Sigmoid colon (tissue), 7 donors: ENCODE measurements at regions of chr22 and their contacts with region 1.

Region 1: DNA sequence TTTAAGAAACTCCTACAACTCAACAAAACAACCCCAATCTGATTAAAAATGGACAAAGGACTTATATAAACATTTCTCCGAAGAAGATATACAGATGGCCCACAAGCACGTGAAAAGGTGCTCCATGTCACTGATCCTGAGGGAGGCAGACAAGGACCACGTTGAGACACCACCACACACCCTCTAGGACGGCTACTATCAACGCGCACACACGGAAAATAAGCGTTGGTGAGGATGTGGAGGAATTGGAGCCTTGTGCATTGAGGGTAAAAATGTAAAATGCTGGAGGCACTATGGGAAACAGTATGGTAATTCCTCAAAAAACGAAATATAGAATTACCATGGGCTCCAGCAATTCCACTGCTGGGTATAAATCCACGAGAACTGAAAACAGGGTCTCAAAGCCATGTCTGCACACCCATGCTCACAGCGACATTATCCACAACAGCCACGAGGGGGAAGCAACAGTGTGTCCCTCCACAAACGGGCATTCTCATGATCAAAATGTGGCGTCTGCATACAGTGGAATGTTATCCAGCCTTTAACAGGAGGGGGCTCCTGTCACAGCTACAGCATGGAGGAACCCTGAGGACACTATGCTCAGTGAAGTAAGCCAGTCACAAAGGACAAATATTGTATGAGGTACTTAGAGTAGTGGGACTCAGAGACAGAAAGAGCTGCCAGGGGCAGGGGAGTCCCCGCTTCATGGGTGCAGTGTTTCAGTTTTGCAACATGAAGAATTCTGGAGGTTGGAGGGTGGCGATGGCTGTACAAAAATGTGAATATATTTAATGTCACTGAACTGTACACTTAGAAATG is 22.5 kb downstream of the YPEL1 start:
- DNase-seq: no peak
- H3K4me3 ChIP-seq: peak overlapping the region in 2 of 4 donors; percentile 7 to 14
- H3K27ac ChIP-seq: peak overlapping the region; percentile 0 to 54 (median 19)
- H3K4me1 ChIP-seq: peaks cover 0 to 15% (median 6%) of the 10 kb centered on the region in 4 donors
- H3K27me3 ChIP-seq: no peaks in the 10 kb centered on the region
- CTCF ChIP-seq: peak; percentile 75 to 84 (median 82)
- EP300 ChIP-seq: no peak
- POLR2A ChIP-seq: no peak

Region 2: GRCh38 chr22:21444701-21445436 is 268.2 kb before region 1 on chr22:
- intact Hi-C with region 1: no loop called
- DNase-seq: peak; percentile 63
- H3K4me3 ChIP-seq: no peak overlapping the region
- H3K27ac ChIP-seq: no peak overlapping the region
- H3K4me1 ChIP-seq: no peaks in the 10 kb centered on the region
- H3K27me3 ChIP-seq: no peaks in the 10 kb centered on the region
- CTCF ChIP-seq: no peak
- EP300 ChIP-seq: no peak
- POLR2A ChIP-seq: no peak

Region 3: DNA sequence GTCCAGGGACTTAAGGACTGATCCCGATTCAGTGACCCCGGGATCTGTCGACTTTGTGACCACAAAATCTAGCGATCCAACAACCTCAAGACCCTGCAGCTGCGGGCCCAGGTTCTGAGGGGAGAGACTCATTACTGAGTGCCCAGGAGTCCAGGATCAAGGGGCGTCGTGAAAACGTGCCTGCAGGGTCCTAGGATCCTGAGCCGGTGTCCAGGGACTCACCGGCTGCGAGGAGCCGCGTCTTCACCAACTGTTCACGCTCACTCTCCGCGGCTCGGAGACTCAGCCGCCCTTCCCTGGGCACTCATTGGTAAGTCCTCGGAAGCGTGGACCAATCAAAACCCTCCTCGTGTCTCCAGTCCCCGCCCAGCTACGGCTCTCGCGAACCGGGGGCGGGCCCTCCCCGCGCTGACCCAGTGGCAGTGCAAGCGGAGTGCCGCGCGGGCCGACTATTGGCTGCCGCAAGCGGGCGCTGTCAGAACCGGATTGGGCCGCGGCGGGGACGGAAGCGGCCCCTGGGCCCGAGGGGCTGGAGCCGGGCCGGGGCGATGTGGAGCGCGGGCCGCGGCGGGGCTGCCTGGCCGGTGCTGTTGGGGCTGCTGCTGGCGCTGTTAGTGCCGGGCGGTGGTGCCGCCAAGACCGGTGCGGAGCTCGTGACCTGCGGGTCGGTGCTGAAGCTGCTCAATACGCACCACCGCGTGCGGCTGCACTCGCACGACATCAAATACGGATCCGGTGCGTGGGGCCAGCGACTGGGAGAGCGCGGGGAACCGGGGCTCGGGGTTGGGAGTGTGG is 71.1 kb before region 1 on chr22 and contains the start of gene SDF2L1:
- intact Hi-C with region 1: no loop called
- DNase-seq: peak; percentile 99
- H3K4me3 ChIP-seq: peak within 1 kb of the TSS; percentile 48 to 69 (median 66)
- H3K27ac ChIP-seq: peak within 1 kb of the TSS; percentile 67 to 79 (median 74)
- H3K4me1 ChIP-seq: peaks cover 0 to 30% (median 20%) of the 10 kb centered on the region in 4 donors
- H3K27me3 ChIP-seq: no peaks in the 10 kb centered on the region
- CTCF ChIP-seq: no peak
- EP300 ChIP-seq: no peak
- POLR2A ChIP-seq: peak in 1 of 2 donors; percentile 9
- total RNA-seq, gene SDF2L1: 6.1 to 38.8 (median 24.4) TPM

Region 4: DNA sequence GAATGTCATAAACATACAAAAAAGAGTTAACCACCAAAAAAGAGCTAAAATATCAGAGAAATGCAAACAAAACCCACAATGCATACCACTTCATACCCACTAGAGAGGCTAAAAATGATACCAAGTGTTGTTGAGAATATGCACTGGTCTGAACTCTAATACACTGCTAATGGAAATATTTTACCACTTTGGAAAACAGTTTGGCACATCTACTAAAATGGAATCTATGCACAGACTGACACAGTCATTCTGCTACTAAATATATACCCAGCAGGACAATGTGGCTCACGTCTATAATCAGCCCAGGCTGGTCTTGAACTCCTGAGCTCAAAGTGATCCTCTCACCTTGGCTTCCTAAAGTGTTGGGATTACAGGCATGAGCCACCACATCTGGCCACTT is 136.4 kb after region 1 on chr22:
- intact Hi-C with region 1: no loop called
- DNase-seq: no peak
- H3K4me3 ChIP-seq: no peak overlapping the region
- H3K27ac ChIP-seq: peak overlapping the region in 3 of 4 donors; percentile 4 to 70 (median 12)
- H3K4me1 ChIP-seq: peaks cover 0 to 50% (median 27%) of the 10 kb centered on the region in 4 donors
- H3K27me3 ChIP-seq: no peaks in the 10 kb centered on the region
- CTCF ChIP-seq: no peak
- EP300 ChIP-seq: no peak
- POLR2A ChIP-seq: no peak

Region 5: GRCh38 chr22:21952586-21953571 is 239.8 kb after region 1 on chr22 and contains the start of gene PPM1F:
- intact Hi-C with region 1: loop called (anchors 1 kb)
- DNase-seq: peak; percentile 91
- H3K4me3 ChIP-seq: peak within 1 kb of the TSS; percentile 67 to 83 (median 70)
- H3K27ac ChIP-seq: peak within 1 kb of the TSS; percentile 73 to 79 (median 74)
- H3K4me1 ChIP-seq: peaks cover 0 to 27% (median 18%) of the 10 kb centered on the region in 4 donors
- H3K27me3 ChIP-seq: no peaks in the 10 kb centered on the region
- CTCF ChIP-seq: peak; percentile 12 to 93 (median 62)
- EP300 ChIP-seq: no peak
- POLR2A ChIP-seq: no peak
- total RNA-seq, gene PPM1F: 20.3 to 39.2 (median 30.6) TPM

Region 6: GRCh38 chr22:22235558-22235957 is 522.5 kb after region 1 on chr22:
- intact Hi-C with region 1: no loop called
- DNase-seq: no peak
- H3K4me3 ChIP-seq: no peak overlapping the region
- H3K27ac ChIP-seq: no peak overlapping the region
- H3K4me1 ChIP-seq: no peaks in the 10 kb centered on the region
- H3K27me3 ChIP-seq: peaks cover 0 to 9% (median 0%) of the 10 kb centered on the region in 3 donors
- CTCF ChIP-seq: no peak
- EP300 ChIP-seq: no peak
- POLR2A ChIP-seq: no peak